HEK293 (cell line): ENCODE measurements at regions of chr14 and their contacts with region 1.

Region 1: DNA sequence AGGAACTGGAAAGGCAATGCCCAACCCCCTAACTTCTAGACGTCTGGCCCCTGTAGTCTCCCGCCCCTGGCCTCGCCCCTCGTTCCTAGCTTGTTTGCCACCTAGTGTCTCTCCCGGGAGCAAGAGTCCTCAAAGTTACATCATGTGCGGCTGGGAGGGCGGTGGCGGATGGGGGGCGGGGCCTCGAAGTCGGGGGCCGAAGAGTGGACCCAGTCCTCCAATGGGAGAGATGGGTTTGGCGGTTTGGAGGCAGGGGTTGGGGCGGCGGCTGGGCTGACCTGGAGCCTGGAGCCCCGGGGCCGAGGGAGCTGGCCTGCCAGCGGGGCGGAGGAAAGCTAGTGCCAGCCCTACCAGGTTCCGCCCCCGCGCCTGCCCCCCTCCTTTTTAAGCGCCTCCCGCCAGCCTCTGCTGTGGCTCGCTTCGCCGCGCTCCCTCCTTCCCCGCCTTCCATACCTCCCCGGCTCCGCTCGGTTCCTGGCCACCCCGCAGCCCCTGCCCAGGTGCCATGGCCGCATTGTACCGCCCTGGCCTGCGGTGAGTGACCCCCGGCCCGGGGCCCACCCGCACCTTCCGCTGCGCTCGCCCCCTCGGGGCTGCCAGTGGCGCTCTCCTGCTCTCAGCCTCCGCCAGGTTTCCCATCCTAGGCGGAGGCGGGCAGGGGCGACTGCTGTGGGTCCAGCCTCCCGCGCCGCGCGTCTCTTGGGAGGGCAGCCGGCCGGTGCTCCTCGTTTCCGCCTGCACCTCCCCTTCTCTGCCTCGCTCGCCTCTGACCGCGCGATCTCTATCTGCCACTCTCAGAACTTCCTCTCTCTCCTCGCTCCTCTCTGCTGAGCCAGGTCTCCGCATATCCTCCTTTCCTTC is at the start of gene PCK2:
- H3K4me3 ChIP-seq: peak within 1 kb of the TSS; percentile 81
- H3K27ac ChIP-seq: peak within 1 kb of the TSS; percentile 87
- H3K4me1 ChIP-seq: peaks cover 3% of the 10 kb centered on the region; the same call in 1 of the 2 replicates
- CTCF ChIP-seq: peak; percentile 77

Region 2: DNA sequence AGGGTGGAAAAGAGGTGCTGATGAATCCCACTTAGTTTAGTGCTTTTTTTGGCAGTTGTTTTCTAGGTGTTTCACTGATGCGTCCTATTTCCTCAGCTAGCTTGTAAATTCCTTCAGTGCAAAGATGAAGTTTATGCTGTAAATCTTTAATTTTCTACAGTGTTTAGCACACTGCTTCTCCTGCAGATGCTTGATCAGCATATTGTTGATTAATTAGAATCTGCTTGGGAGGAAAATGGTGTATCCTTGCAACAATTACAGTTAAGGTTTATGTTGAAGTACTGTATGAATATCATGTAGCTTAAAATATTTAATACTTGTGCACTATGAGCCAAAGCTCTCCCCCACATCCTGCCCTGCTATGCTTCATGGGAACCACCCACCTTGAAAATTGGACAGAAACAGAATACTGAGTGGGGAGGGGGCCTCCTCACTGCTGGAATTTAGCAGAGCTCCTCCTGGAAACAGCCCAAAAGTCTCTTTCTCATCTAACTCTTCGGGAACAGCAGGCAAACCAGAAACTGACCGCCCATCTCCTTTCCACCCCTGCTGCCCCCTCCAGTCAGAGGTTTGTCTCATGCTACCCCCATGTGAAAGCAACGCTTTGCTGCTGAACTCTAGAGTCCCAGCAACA is 160.9 kb before region 1 on chr14:
- CTCF ChIA-PET with region 1: no interaction called
- POLR2A ChIA-PET with region 1: no interaction called
- H3K4me3 ChIP-seq: no peak overlapping the region
- H3K27ac ChIP-seq: no peak overlapping the region
- H3K4me1 ChIP-seq: no peaks in the 10 kb centered on the region
- CTCF ChIP-seq: no peak

Region 3: GRCh38 chr14:24051789-24052655 is 42.1 kb before region 1 on chr14 and contains the start of gene CARMIL3:
- CTCF ChIA-PET with region 1: interaction called, 247 read pairs
- POLR2A ChIA-PET with region 1: interaction called, 22 read pairs
- H3K4me3 ChIP-seq: peak within 1 kb of the TSS; percentile 52
- H3K27ac ChIP-seq: no peak within 1 kb of the TSS; the same call in 1 of the 2 replicates
- H3K4me1 ChIP-seq: no peaks in the 10 kb centered on the region
- CTCF ChIP-seq: 0 out of 2 replicates have a peak, but pooled peaks have one; percentile 12

Region 4: GRCh38 chr14:24075485-24076301 is 18.4 kb before region 1 on chr14:
- CTCF ChIA-PET with region 1: interaction called, 77 read pairs
- POLR2A ChIA-PET with region 1: interaction called, 27 read pairs
- H3K4me3 ChIP-seq: no peak overlapping the region
- H3K27ac ChIP-seq: no peak overlapping the region
- H3K4me1 ChIP-seq: peaks cover 5% of the 10 kb centered on the region; the same call in 1 of the 2 replicates
- CTCF ChIP-seq: no peak

Region 5: GRCh38 chr14:24108336-24108874 is 14.3 kb after region 1 on chr14:
- CTCF ChIA-PET with region 1: interaction called, 145 read pairs
- POLR2A ChIA-PET with region 1: interaction called, 64 read pairs
- H3K4me3 ChIP-seq: no peak overlapping the region
- H3K27ac ChIP-seq: no peak overlapping the region
- H3K4me1 ChIP-seq: no peaks in the 10 kb centered on the region
- CTCF ChIP-seq: no peak

Region 6: DNA sequence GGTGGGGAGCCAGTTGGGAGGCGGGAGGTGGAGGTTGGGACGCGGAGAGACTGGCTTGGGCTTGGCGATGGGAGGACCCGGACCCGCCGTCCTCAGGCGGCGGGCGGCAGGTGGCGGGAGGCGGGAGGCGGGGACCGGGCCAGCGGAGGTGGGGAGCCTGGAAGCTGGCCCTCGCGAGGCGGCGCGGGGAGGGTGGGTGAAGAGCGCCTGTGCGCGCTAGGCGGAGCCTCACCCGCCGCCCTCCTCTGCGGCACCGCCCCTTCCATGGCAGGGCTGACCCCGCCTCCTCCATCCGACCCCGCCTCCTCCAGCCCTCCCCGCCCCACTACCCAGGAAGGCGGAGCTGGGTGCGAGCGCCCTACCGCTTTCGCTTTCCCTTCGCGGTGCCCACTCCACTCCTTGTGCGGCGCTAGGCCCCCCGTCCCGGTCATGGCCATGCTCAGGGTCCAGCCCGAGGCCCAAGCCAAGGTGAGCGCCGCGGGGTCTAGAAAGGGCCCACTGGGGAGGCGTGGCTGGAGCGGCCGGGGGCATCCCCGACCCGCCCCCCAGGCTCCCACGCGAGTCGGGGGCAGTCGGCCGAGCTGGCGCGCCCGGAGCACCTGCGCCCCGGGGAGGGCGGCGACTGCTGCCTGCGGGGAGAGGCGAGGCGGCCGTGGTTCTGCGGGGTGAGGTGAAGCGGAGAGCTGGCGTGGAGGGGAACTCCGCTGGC is 41.9 kb after region 1 on chr14 and contains the start of gene PSME1:
- CTCF ChIA-PET with region 1: interaction called, 3 read pairs
- POLR2A ChIA-PET with region 1: interaction called, 21 read pairs
- H3K4me3 ChIP-seq: peak within 1 kb of the TSS; percentile 92
- H3K27ac ChIP-seq: peak within 1 kb of the TSS; percentile 90
- H3K4me1 ChIP-seq: peaks cover 4% of the 10 kb centered on the region; the same call in 1 of the 2 replicates
- CTCF ChIP-seq: peak; percentile 8; the same call in 1 of the 2 replicates

Region 7: DNA sequence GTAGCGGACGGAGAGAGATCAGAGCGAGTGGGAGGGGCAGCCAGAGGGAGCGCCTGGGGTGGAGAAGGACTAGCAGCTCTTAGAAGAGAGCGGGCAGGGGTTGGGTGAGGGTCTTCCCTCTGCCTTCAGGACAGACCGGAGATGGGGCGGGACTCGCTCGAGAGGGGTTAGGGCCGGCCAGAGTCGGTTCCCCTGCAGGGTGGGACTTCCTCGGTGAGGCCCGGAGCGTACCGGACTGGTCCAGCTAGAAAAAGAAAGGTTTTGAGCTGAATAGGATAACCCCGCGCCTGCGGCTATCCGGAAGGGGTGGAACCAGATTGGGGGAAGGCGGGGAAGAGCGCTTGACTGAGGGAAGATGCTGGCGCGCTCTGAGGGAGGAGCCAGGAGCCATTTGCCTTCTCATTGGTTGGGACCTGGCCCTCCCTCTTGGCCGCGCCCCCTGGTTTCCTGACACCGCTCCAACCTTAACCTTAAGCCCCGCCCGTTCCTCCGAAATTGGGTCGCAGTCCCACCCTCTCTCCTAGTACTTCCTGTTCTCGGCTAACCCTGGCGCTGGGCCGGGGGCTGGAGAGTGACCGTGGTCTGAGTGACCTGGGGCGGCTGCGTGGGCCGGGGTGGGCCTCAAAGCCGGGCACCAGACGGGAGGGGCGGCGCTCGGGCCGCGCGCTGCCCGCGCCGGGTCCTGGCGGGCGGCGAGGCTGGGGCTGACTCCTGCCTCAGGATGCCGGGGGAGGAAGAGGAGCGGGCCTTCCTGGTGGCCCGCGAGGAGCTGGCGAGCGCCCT is 53.0 kb after region 1 on chr14 and contains the start of gene RNF31:
- CTCF ChIA-PET with region 1: interaction called, 5 read pairs
- POLR2A ChIA-PET with region 1: interaction called, 22 read pairs
- H3K4me3 ChIP-seq: peak within 1 kb of the TSS; percentile 91
- H3K27ac ChIP-seq: peak within 1 kb of the TSS; percentile 81; the same call in 1 of the 2 replicates
- H3K4me1 ChIP-seq: peaks cover 8% of the 10 kb centered on the region
- CTCF ChIP-seq: no peak

Region 8: GRCh38 chr14:24315807-24316603 is 221.9 kb after region 1 on chr14:
- CTCF ChIA-PET with region 1: no interaction called
- POLR2A ChIA-PET with region 1: no interaction called
- H3K4me3 ChIP-seq: no peak overlapping the region
- H3K27ac ChIP-seq: no peak overlapping the region
- H3K4me1 ChIP-seq: no peaks in the 10 kb centered on the region
- CTCF ChIP-seq: no peak